AG04450 (cell line): ENCODE measurements at regions of chr14 and their contacts with region 1.

Region 1: GRCh38 chr14:99682809-99683618 is 1.1 kb upstream of the CYP46A1 start:
- DNase-seq: peak; percentile 21
- H3K4me3 ChIP-seq: peak overlapping the region; percentile 81
- H3K27ac ChIP-seq: peak overlapping the region; percentile 70
- H3K27me3 ChIP-seq: peaks cover 22% of the 10 kb centered on the region
- CTCF ChIP-seq: peak; percentile 84

Region 2: GRCh38 chr14:99884834-99885648 is 202.0 kb after region 1 on chr14:
- CTCF ChIA-PET with region 1: interaction called, 10 read pairs
- POLR2A ChIA-PET with region 1: no interaction called
- DNase-seq: peak; percentile 34
- H3K4me3 ChIP-seq: no peak overlapping the region
- H3K27ac ChIP-seq: no peak overlapping the region
- H3K27me3 ChIP-seq: no peaks in the 10 kb centered on the region
- CTCF ChIP-seq: peak; percentile 78